ENCODE measurements at regions of chr13 and their contacts with region 1.

Region 1: DNA sequence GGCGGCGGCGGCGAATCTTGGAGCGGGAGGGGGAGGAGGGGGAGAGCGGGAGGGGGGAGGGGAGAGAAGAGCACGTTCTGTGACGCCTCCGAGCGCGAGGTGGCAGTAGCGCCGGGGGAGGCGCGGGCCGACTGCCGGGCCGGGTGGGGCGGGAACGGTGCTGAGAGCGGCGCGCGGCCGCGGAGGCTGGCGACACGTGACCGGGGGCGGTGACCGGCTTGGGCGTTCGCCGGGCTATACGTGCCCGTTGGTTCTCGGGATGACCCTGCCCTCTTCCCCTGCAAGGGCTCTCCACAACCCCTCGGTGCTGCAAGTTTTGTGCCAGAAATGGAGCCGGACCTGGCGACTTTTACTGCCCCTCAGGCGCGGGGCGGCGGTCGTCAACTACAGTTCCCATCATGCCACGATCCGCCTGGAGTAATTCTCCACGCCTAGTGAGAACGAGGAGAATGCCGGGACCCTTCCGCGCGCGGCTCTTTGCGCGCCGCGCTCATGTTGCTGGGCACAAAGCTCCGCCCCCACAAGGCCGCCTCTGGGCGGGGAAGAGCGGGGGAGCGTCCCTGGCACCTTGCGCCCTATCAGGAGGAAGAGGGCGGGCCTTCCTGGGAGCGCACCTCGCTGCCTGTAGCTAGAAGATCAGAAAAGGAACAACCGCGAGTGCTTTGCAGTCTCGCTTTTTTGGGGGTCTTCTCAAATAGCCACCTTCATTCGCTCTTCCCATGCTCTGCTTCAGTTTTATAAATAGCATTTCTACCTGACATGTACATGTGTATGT is at the start of gene KPNA3:
- DNase-seq: peak; percentile 96 to 98 (median 98)
- ATAC-seq: peak; percentile 96 to 98 (median 97)
- H3K4me3 ChIP-seq: peak within 1 kb of the TSS; percentile 67 to 100 (median 94)
- H3K27ac ChIP-seq: peak within 1 kb of the TSS; percentile 87 to 98 (median 94)
- H3K4me1 ChIP-seq: peaks cover 0 to 40% (median 27%) of the 10 kb centered on the region in 12 donors
- H3K27me3 ChIP-seq: no peaks in the 10 kb centered on the region
- CTCF ChIP-seq: peak in 7 of 12 donors; percentile 21 to 43 (median 38)
- POLR2A ChIP-seq: peak in 1 of 2 donors; percentile 76
- total RNA-seq, gene KPNA3: 39.2 to 104 (median 56.5) TPM

Region 2: DNA sequence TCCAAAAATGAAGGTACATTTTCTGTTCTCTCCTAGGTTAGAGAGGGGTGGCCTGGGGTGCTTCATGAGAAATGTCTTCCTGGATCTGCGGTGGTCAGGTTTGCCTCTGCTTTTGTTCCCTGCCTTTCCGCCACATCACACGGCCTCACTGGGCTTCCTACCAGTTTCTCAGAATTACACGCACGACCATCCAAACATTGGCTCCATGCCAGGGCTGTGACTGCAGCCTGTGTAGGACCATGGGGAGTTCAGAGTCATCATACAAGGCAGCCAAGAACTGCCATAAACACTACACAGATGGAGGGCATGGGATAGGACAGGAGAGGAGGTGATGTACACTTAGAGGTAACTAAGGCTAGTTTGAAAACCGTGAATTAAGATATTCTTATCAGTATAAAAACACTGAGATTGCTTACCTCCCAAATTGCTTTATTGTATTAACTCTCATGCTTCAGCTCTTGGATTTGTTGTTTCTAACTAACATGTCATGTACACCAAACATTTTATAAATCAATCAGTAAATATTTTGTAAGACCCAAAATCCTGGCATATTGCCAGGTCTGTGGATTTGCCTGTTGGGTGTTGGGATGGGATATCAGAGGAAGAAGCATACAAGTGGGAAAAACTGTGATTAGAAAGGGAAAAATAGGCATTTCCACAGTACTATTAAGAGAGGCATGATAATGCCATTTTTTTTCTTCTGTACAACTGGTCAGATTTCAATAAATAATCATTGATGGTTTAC is 499.8 kb before region 1 on chr13:
- intact Hi-C with region 1: no loop called
- DNase-seq: peak; percentile 57 to 75 (median 65)
- ATAC-seq: peak in 3 of 4 donors; percentile 73 to 79 (median 77)
- H3K4me3 ChIP-seq: no peak overlapping the region
- H3K27ac ChIP-seq: peak overlapping the region in 1 of 12 donors; percentile 36
- H3K4me1 ChIP-seq: peaks cover 0 to 8% (median 4%) of the 10 kb centered on the region in 12 donors
- H3K27me3 ChIP-seq: no peaks in the 10 kb centered on the region
- CTCF ChIP-seq: no peak
- POLR2A ChIP-seq: no peak

Region 3: GRCh38 chr13:49635599-49636433 is 156.9 kb before region 1 on chr13:
- intact Hi-C with region 1: no loop called
- DNase-seq: peak in 2 of 5 donors; percentile 44 to 54
- ATAC-seq: no peak
- H3K4me3 ChIP-seq: peak overlapping the region in 9 of 12 donors; percentile 19 to 51 (median 31)
- H3K27ac ChIP-seq: peak overlapping the region in 2 of 12 donors; percentile 12 to 42
- H3K4me1 ChIP-seq: peaks cover 0 to 36% (median 3%) of the 10 kb centered on the region in 12 donors
- H3K27me3 ChIP-seq: no peaks in the 10 kb centered on the region
- CTCF ChIP-seq: no peak
- POLR2A ChIP-seq: no peak

Region 4: GRCh38 chr13:49669735-49670309 is 122.9 kb before region 1 on chr13:
- intact Hi-C with region 1: loop called in 1 of 10 experiments (anchors 10 kb)
- DNase-seq: peak in 4 of 5 donors; percentile 36 to 53 (median 48)
- ATAC-seq: peak; percentile 89 to 96 (median 93)
- H3K4me3 ChIP-seq: no peak overlapping the region
- H3K27ac ChIP-seq: no peak overlapping the region
- H3K4me1 ChIP-seq: peaks cover 0 to 9% (median 0%) of the 10 kb centered on the region in 12 donors
- H3K27me3 ChIP-seq: no peaks in the 10 kb centered on the region
- CTCF ChIP-seq: peak; percentile 55 to 84 (median 65)
- POLR2A ChIP-seq: no peak

Region 5: GRCh38 chr13:49690992-49691886 is 101.5 kb before region 1 on chr13 and contains the start of gene EBPL:
- intact Hi-C with region 1: loop called in 7 of 10 experiments (anchors 5 to 10 kb)
- DNase-seq: peak; percentile 91 to 96 (median 94)
- ATAC-seq: peak; percentile 96 to 100 (median 100)
- H3K4me3 ChIP-seq: peak within 1 kb of the TSS; percentile 18 to 97 (median 74)
- H3K27ac ChIP-seq: peak within 1 kb of the TSS; percentile 17 to 90 (median 76)
- H3K4me1 ChIP-seq: peaks cover 0 to 15% (median 6%) of the 10 kb centered on the region in 12 donors
- H3K27me3 ChIP-seq: no peaks in the 10 kb centered on the region
- CTCF ChIP-seq: peak in 2 of 12 donors; percentile 8 to 11
- POLR2A ChIP-seq: peak in 1 of 2 donors; percentile 23
- total RNA-seq, gene EBPL: 3.2 to 13.8 (median 5.8) TPM

Region 6: DNA sequence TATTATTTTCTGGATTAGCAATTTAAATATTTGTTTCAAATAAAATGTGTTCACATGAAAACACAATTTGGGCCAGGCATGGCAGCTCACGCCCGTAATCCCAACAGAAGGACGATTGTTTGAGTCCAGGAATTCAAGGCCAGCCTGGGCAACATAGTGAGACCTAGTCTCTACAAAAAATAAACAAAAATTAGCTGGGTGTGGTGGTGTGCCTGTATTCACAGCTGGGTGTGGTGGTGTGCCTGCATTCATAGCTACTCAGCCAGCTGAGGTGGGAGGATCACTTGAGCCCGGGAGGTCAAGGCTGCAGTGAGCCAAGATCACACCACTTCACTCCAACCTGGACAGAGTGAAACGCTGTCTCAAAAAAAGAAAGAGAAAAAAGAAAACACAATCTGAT is 46.6 kb before region 1 on chr13:
- intact Hi-C with region 1: loop called in 1 of 10 experiments (anchors 5 kb)
- DNase-seq: no peak
- ATAC-seq: peak in 2 of 4 donors; percentile 38 to 42
- H3K4me3 ChIP-seq: no peak overlapping the region
- H3K27ac ChIP-seq: no peak overlapping the region
- H3K4me1 ChIP-seq: peaks cover 0 to 15% (median 0%) of the 10 kb centered on the region in 12 donors
- H3K27me3 ChIP-seq: no peaks in the 10 kb centered on the region
- CTCF ChIP-seq: no peak
- POLR2A ChIP-seq: no peak

Region 7: DNA sequence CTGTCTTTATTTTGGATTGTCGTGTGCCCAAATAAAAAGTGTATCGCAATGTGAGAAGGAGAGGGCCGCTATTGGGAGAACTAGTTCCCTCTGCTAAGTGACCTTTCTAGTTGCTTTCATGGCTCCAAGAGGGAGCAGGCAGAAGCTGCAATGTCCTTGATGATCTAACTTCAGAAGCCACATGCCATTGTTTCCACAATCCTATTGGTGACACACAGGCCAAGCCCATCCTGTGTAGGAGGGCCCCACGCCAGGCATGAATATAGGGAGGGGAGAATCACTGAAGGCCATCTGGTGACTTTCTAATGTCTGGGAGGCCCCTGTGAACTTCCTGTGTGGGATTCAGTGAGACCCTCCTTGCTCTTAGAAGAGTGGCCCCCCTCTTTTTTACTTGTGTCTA is 47.5 kb after region 1 on chr13:
- intact Hi-C with region 1: loop called in 1 of 10 experiments (anchors 10 kb)
- DNase-seq: no peak
- ATAC-seq: peak in 3 of 4 donors; percentile 32 to 42 (median 36)
- H3K4me3 ChIP-seq: no peak overlapping the region
- H3K27ac ChIP-seq: no peak overlapping the region
- H3K4me1 ChIP-seq: no peaks in the 10 kb centered on the region
- H3K27me3 ChIP-seq: no peaks in the 10 kb centered on the region
- CTCF ChIP-seq: no peak
- POLR2A ChIP-seq: no peak

Region 8: GRCh38 chr13:49936085-49936940 is 143.6 kb after region 1 on chr13 and contains the start of gene SPRYD7:
- intact Hi-C with region 1: loop called in 1 of 10 experiments (anchors 10 kb)
- DNase-seq: peak; percentile 98 to 99 (median 99)
- ATAC-seq: peak; percentile 99 to 100 (median 100)
- H3K4me3 ChIP-seq: peak within 1 kb of the TSS; percentile 64 to 86 (median 78)
- H3K27ac ChIP-seq: peak within 1 kb of the TSS; percentile 43 to 90 (median 84)
- H3K4me1 ChIP-seq: peaks cover 0 to 50% (median 20%) of the 10 kb centered on the region in 12 donors
- H3K27me3 ChIP-seq: no peaks in the 10 kb centered on the region
- CTCF ChIP-seq: peak; percentile 78 to 99 (median 94)
- POLR2A ChIP-seq: peak; percentile 7 to 66
- total RNA-seq, gene SPRYD7: 6.3 to 14.3 (median 12.3) TPM

Measured in heart left ventricle (tissue), 16 donors.